ENCODE measurements at regions of chr5 and their contacts with region 1.

Region 1: GRCh38 chr5:131382407-131383395 is 118.8 kb downstream of the CDC42SE2 start:
- DNase-seq: peak; percentile 87
- ATAC-seq: peak; percentile 72
- H3K4me3 ChIP-seq: peak overlapping the region in 1 of 5 experiments; percentile 15
- H3K4me3 Mint-ChIP-seq: peak overlapping the region; percentile 68
- H3K27ac ChIP-seq: peak overlapping the region; percentile 99
- H3K27ac Mint-ChIP-seq: peak overlapping the region; percentile 86
- H3K4me1 ChIP-seq: peaks cover 52 to 55% of the 10 kb centered on the region in 2 donors
- H3K4me1 Mint-ChIP-seq: peaks cover 58% of the 10 kb centered on the region
- H3K27me3 ChIP-seq: no peaks in the 10 kb centered on the region
- H3K27me3 Mint-ChIP-seq: no peaks in the 10 kb centered on the region
- CTCF ChIP-seq: peak; percentile 75

Region 2: DNA sequence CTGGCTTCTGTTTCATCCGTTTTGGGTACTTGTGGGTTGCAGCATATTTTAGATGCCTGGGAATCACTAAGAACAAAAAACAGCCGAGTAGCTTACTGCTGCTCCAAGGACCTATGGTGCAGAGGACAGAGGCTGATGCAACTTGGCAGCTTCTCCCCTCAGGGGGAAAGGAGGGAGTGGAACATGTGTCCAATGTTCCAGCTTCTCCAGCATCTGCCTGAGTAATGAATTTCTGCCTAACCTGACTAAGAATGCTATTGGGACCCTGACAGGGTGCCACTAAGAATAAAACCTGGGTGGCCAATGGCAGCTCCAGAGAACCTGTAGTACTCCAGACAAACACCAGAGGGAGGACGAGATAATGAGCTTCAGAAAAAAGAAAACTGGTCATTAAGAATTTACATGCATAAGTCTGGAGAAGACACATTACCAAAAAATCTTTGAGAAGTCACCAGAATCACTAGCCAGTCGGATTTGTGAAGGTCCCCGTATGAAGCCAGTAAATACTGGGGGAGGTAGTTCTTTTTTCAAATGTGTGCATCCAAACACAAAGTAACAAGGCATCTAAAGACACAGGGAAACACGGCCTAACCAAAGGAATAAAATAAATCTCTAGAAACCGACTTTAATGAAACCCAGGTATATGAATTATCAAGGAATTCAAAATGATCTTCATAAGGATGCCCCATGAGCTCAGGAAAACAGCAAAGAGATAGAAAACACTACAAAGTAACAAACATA is 511.2 kb before region 1 on chr5:
- CTCF ChIA-PET with region 1: interaction called, 12 read pairs
- POLR2A ChIA-PET with region 1: no interaction called
- intact Hi-C with region 1: no loop called
- DNase-seq: peak; percentile 50
- ATAC-seq: peak; percentile 45
- H3K4me3 ChIP-seq: no peak overlapping the region
- H3K4me3 Mint-ChIP-seq: no peak overlapping the region
- H3K27ac ChIP-seq: no peak overlapping the region
- H3K27ac Mint-ChIP-seq: no peak overlapping the region
- H3K4me1 ChIP-seq: no peaks in the 10 kb centered on the region
- H3K4me1 Mint-ChIP-seq: no peaks in the 10 kb centered on the region
- H3K27me3 ChIP-seq: no peaks in the 10 kb centered on the region
- H3K27me3 Mint-ChIP-seq: no peaks in the 10 kb centered on the region
- CTCF ChIP-seq: peak; percentile 69

Region 3: DNA sequence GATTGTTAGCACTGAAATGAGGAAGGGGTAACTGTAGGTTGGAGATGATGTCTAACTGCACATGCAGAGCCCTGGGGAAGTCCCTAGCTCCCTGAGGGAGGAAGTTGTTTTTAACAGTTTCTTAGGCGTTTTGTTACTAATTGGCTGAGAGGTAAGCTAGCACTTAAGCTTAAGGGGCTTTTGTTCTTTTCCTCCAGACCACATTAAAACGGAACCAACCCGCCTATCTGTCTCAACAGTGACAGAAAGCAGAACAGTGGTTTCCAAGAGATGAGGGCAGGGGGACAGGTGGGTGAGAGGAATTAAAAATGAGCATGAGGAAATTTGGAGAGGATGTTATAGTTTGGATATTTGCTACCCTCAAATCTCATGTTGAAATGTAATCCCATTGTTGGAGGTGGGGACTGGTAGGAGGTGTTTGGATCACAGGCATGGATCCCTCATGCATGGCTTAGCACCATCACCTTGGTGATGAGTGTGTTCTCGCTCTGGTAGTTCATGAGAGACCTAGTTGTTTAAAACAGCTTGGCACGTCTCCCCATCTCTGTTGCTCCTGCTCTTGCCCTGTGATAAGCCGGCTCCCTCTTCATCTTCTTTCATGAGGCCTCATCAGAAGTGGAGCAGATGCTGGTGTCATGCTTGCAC is 173.1 kb before region 1 on chr5:
- CTCF ChIA-PET with region 1: interaction called, 21 read pairs
- POLR2A ChIA-PET with region 1: interaction called, 6 read pairs
- intact Hi-C with region 1: loop called (anchors 1 kb)
- DNase-seq: peak; percentile 94
- ATAC-seq: peak; percentile 87
- H3K4me3 ChIP-seq: peak overlapping the region; percentile 42 to 88 (median 59)
- H3K4me3 Mint-ChIP-seq: peak overlapping the region; percentile 85
- H3K27ac ChIP-seq: peak overlapping the region; percentile 89 to 92
- H3K27ac Mint-ChIP-seq: peak overlapping the region; percentile 98
- H3K4me1 ChIP-seq: peaks cover 37 to 53% of the 10 kb centered on the region in 2 donors
- H3K4me1 Mint-ChIP-seq: peaks cover 51% of the 10 kb centered on the region
- H3K27me3 ChIP-seq: no peaks in the 10 kb centered on the region
- H3K27me3 Mint-ChIP-seq: no peaks in the 10 kb centered on the region
- CTCF ChIP-seq: no peak

Region 4: DNA sequence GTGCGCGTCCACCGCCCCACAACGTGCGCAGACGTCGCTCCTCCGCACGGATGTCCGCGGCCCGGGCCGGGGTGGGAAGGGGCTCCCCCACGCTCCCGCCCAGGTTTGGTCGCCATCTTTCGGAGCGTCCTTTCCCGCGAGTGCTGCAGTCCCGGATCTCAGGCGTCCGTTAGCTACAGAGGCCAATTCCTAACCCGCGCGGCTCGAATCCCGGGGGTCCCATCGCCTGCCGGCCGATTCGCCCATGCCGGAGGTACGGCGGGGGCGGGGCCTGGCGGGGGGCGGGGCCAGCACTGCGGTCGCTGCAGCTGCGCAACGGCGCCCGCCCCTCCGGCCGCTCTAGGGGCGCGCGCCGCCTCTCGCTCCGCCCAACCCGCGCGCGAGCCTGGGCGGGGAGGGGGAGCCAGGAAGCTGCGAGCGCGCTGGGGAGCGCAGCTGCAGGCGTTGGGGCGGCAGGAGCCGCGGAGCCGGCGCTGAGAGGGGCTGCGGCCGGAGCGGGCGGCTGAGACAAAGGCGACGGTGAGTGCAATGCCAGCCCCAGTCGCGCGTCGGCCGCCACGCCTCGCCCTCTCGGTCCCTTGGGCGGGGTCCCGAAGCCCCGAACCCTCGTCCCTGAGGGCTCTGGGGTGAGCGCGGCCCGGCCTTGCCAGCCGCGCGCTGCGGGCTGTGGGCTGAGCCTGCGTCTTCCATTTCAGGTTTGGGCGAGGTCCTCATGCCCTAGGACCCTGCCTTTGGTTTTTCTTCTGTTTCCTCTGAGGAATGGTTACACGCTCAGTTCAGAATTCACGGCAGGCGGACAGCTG is 118.9 kb before region 1 on chr5 and contains the start of gene CDC42SE2:
- CTCF ChIA-PET with region 1: interaction called, 117 read pairs
- POLR2A ChIA-PET with region 1: interaction called, 23 read pairs
- intact Hi-C with region 1: loop called (anchors 1 kb)
- DNase-seq: peak; percentile 93
- ATAC-seq: peak; percentile 87
- H3K4me3 ChIP-seq: peak within 1 kb of the TSS; percentile 76 to 100 (median 95)
- H3K4me3 Mint-ChIP-seq: peak within 1 kb of the TSS; percentile 89
- H3K27ac ChIP-seq: peak within 1 kb of the TSS; percentile 83 to 88
- H3K27ac Mint-ChIP-seq: peak within 1 kb of the TSS; percentile 98
- H3K4me1 ChIP-seq: peaks cover 33 to 41% of the 10 kb centered on the region in 2 donors
- H3K4me1 Mint-ChIP-seq: peaks cover 42% of the 10 kb centered on the region
- H3K27me3 ChIP-seq: no peaks in the 10 kb centered on the region
- H3K27me3 Mint-ChIP-seq: no peaks in the 10 kb centered on the region
- CTCF ChIP-seq: no peak
- total RNA-seq, gene CDC42SE2: 161 and 162 TPM in 2 replicates

Region 5: DNA sequence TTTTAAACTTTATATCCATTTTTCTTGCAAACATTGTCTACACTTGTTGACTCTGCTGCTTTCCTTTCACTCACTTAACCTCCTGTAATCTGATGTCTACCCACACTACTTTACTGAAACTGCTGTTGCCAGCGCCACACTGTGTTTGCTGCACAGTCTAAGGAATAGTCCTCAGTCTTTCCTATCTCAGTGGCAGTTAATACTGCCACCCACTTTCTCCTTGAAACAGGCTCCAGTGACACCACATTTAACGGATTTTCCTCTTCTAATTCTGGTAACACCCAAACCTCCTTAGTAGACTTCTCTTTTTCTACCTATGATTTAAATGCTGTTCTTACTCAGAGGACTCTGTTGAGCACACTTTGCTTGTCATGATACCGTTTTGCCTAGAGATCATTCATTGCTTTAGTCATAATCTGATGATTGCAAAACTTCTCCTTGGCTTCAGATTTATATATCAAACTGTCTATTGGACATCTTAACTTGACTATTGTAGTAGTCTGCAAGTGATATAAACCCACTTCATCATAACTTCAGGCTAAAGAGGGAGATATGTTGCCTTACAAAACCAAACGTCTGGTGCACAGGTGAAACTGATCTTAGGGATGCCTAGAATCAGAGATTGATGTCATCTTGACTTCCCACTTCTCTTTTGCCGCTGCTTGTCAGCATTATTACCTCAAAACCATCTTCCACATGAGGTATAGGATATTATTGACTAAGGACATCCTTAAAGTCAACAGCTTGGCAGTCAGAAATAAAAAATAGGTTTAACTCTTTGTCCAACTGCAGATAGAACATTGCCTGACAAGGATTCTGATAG is 24.8 kb before region 1 on chr5:
- CTCF ChIA-PET with region 1: interaction called, 16 read pairs
- POLR2A ChIA-PET with region 1: no interaction called
- intact Hi-C with region 1: no loop called
- DNase-seq: peak; percentile 63
- ATAC-seq: peak; percentile 52
- H3K4me3 ChIP-seq: peak overlapping the region in 1 of 5 experiments; percentile 16
- H3K4me3 Mint-ChIP-seq: peak overlapping the region; percentile 64
- H3K27ac ChIP-seq: peak overlapping the region; percentile 67 to 80
- H3K27ac Mint-ChIP-seq: peak overlapping the region; percentile 87
- H3K4me1 ChIP-seq: peaks cover 27 to 32% of the 10 kb centered on the region in 2 donors
- H3K4me1 Mint-ChIP-seq: peaks cover 45% of the 10 kb centered on the region
- H3K27me3 ChIP-seq: no peaks in the 10 kb centered on the region
- H3K27me3 Mint-ChIP-seq: no peaks in the 10 kb centered on the region
- CTCF ChIP-seq: no peak

Region 6: DNA sequence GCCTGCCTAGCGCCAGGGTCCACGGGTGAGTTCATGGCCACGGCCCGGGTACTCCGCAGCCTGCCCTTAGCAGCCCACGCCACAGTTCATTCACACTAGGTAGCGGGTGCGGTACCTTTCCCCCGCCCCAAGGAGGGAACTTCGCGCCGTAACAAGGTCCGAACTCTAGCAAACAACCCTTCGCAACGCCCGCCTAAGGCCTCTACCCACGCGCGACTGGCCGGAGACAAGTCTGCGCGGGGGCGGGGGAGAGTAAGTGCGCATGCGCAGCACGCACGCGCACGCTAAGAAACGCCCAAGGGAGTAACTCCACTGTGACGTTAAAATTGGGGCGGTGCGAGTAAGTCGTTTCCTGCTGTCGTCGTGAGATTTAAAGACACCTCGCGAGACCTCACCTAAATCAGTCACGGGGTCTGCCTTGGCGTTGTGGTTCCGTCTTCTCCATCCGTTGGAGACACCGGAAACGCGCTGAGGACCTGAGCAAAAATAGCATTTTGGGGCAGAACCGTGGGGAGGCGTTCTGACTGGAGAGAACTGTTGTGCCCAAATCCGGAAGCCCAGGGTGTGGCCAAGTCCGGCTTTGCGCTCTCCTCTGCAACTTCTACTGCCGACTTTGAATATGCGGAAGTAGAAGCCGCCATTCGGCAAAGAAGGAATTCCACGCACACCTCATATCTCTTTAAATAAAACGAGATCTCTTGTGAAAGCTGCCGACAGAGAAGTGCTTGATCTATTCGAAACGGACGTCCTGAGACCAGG is 252.5 kb after region 1 on chr5 and contains the start of gene RAPGEF6:
- CTCF ChIA-PET with region 1: no interaction called
- POLR2A ChIA-PET with region 1: no interaction called
- intact Hi-C with region 1: loop called (anchors 10 kb)
- DNase-seq: peak; percentile 100
- ATAC-seq: peak; percentile 83
- H3K4me3 ChIP-seq: peak within 1 kb of the TSS; percentile 77 to 91 (median 86)
- H3K4me3 Mint-ChIP-seq: peak within 1 kb of the TSS; percentile 95
- H3K27ac ChIP-seq: peak within 1 kb of the TSS; percentile 91 to 99
- H3K27ac Mint-ChIP-seq: peak within 1 kb of the TSS; percentile 99
- H3K4me1 ChIP-seq: peaks cover 41 to 46% of the 10 kb centered on the region in 2 donors
- H3K4me1 Mint-ChIP-seq: peaks cover 40% of the 10 kb centered on the region
- H3K27me3 ChIP-seq: no peaks in the 10 kb centered on the region
- H3K27me3 Mint-ChIP-seq: no peaks in the 10 kb centered on the region
- CTCF ChIP-seq: no peak
- total RNA-seq, gene RAPGEF6: 48.7 and 56.2 TPM in 2 replicates

Region 7: DNA sequence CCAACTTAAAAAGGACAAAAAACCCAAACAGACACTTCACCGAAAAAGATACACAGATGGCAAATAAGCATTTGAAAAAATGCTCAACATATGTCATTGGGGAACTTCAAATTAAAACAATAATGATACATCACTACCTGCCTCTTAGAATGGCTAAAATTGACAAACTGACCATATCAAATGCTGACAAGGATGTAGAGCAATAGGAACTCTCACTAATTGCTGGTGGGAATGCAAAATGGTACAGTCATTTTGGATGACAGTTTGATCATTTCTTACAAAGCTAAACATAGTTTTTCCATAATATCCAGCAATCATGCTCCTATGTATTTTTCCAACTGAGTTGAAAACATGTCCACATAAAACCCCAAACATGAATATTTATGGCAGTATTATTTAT is 311.2 kb after region 1 on chr5:
- CTCF ChIA-PET with region 1: no interaction called
- POLR2A ChIA-PET with region 1: no interaction called
- intact Hi-C with region 1: no loop called
- DNase-seq: no peak
- ATAC-seq: no peak
- H3K4me3 ChIP-seq: no peak overlapping the region
- H3K4me3 Mint-ChIP-seq: no peak overlapping the region
- H3K27ac ChIP-seq: no peak overlapping the region
- H3K27ac Mint-ChIP-seq: no peak overlapping the region
- H3K4me1 ChIP-seq: no peaks in the 10 kb centered on the region
- H3K4me1 Mint-ChIP-seq: no peaks in the 10 kb centered on the region
- H3K27me3 ChIP-seq: no peaks in the 10 kb centered on the region
- H3K27me3 Mint-ChIP-seq: no peaks in the 10 kb centered on the region
- CTCF ChIP-seq: no peak

Measured in B cell (primary cell).